ENCODE measurements at regions of chr1 and their contacts with region 1.

Region 1: GRCh38 chr1:16187748-16188401 is 24.6 kb downstream of the ARHGEF19 start:
- DNase-seq: no peak
- H3K4me3 ChIP-seq: no peak overlapping the region
- H3K27me3 ChIP-seq: no peaks in the 10 kb centered on the region
- CTCF ChIP-seq: peak; percentile 97

Region 2: DNA sequence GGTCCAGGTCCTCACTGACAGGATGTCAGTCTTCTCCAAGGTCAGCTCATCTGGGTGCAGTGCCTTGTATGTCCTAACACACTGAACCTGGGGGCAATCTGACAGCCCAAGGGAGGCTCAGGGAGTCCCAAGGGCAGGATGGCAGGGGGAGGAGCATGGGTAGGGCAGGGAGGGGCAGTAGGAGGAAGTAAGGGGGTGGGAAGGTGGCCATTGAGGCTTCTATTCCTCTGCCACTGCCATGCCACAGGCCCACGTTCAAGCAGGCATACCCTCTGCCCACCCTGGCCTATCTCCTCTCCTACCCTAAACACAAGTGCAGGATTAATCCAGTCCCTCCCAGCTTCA is 11.3 kb after region 1 on chr1:
- CTCF ChIA-PET with region 1: interaction called, 12 read pairs
- POLR2A ChIA-PET with region 1: no interaction called
- DNase-seq: no peak
- H3K4me3 ChIP-seq: no peak overlapping the region
- H3K27me3 ChIP-seq: no peaks in the 10 kb centered on the region
- CTCF ChIP-seq: no peak

Region 3: GRCh38 chr1:16243936-16244649 is 56.2 kb after region 1 on chr1:
- CTCF ChIA-PET with region 1: interaction called, 20 read pairs
- POLR2A ChIA-PET with region 1: no interaction called
- DNase-seq: no peak
- H3K4me3 ChIP-seq: no peak overlapping the region
- H3K27me3 ChIP-seq: no peaks in the 10 kb centered on the region
- CTCF ChIP-seq: peak; percentile 89

Region 4: GRCh38 chr1:16420424-16421118 is 232.7 kb after region 1 on chr1:
- CTCF ChIA-PET with region 1: no interaction called
- POLR2A ChIA-PET with region 1: no interaction called
- DNase-seq: no peak
- H3K4me3 ChIP-seq: no peak overlapping the region
- H3K27me3 ChIP-seq: no peaks in the 10 kb centered on the region; the same call in 1 of the 2 replicates
- CTCF ChIP-seq: no peak